Adrenal gland (tissue), 19 donors: ENCODE measurements at regions of chr17 and their contacts with region 1.

Region 1: DNA sequence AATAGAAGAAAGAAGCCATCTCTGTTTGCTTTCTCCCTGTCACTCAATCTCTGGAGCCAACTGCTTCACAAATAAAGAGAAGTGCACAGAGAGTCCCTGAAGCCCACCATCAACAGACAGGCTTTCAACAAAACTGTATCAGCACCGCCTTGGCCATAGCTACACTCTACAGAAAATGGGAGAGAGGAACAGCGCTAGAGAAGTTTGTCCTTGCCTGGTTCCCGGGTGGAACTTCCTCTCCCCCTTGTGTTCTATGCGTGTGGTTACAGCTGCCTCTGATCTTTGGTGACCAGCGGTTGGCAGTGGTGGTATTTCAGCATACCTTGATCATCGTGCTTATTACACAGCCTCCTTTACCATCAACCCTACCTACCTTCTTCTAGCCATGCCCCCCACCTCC is 91.4 kb upstream of the CCL2 start:
- DNase-seq: peak in 3 of 7 donors; percentile 18 to 55 (median 20)
- H3K4me3 ChIP-seq: no peak overlapping the region
- H3K27ac ChIP-seq: no peak overlapping the region
- H3K4me1 ChIP-seq: no peaks in the 10 kb centered on the region
- H3K27me3 ChIP-seq: peaks cover 5% of the 10 kb centered on the region
- CTCF ChIP-seq: peak in 5 of 6 experiments; percentile 15 to 55 (median 49)
- POLR2A ChIP-seq: no peak

Region 2: GRCh38 chr17:33779225-33779591 is 384.4 kb before region 1 on chr17:
- intact Hi-C with region 1: loop called in 1 of 2 experiments (anchors 10 kb)
- DNase-seq: peak; percentile 28 to 81 (median 54)
- H3K4me3 ChIP-seq: no peak overlapping the region
- H3K27ac ChIP-seq: no peak overlapping the region
- H3K4me1 ChIP-seq: no peaks in the 10 kb centered on the region
- H3K27me3 ChIP-seq: no peaks in the 10 kb centered on the region
- CTCF ChIP-seq: peak; percentile 86 to 99 (median 90)
- POLR2A ChIP-seq: no peak